Activated CD8-positive, alpha-beta T cell treated with anti-CD3 and anti-CD28 coated beads for 36 hours (primary cell): ENCODE measurements at regions of chr2 and their contacts with region 1.

Region 1: GRCh38 chr2:236558993-236559978 is 10.3 kb upstream of the ACKR3 start:
- DNase-seq: no peak
- ATAC-seq: peak; percentile 42
- H3K4me3 Mint-ChIP-seq: peak overlapping the region; percentile 34
- H3K27ac Mint-ChIP-seq: peak overlapping the region; percentile 75
- H3K4me1 Mint-ChIP-seq: peaks cover 53% of the 10 kb centered on the region
- H3K27me3 Mint-ChIP-seq: no peaks in the 10 kb centered on the region
- CTCF ChIP-seq: no peak

Region 2: GRCh38 chr2:236536727-236537398 is 22.4 kb before region 1 on chr2:
- CTCF ChIA-PET with region 1: interaction called, 4 read pairs
- POLR2A ChIA-PET with region 1: interaction called, 11 read pairs
- intact Hi-C with region 1: no loop called
- DNase-seq: peak; percentile 70
- ATAC-seq: peak; percentile 81
- H3K4me3 Mint-ChIP-seq: peak overlapping the region; percentile 96
- H3K27ac Mint-ChIP-seq: peak overlapping the region; percentile 96
- H3K4me1 Mint-ChIP-seq: peaks cover 47% of the 10 kb centered on the region
- H3K27me3 Mint-ChIP-seq: no peaks in the 10 kb centered on the region
- CTCF ChIP-seq: no peak